ENCODE measurements at regions of chr17 and their contacts with region 1.

Region 1: DNA sequence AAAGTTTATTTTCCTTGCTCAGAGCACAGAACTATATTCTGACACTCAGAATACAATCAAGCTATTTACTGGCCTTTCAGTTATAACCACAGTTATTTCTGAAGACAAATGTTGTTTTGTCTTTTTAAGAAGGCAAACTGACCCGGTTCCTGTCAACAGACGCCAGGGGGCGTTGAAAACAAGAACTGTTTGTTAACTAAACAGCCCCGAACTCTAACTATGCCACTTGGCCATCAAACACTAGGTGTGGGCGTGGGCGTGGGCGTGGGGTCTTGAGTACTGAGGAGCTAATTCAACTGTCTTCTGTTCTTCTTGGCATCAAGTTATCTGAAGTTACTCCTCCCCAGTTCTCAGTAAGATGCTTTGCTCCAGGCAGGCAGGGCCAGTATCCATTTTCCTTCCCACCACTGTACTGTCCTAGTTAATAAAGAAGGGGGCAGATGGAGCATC is 63.2 kb upstream of the MTMR4 start:
- DNase-seq: peak; percentile 16 to 56
- ATAC-seq: no peak
- H3K4me3 ChIP-seq: no peak overlapping the region
- H3K27ac ChIP-seq: no peak overlapping the region
- H3K4me1 ChIP-seq: no peaks in the 10 kb centered on the region
- H3K27me3 ChIP-seq: no peaks in the 10 kb centered on the region
- CTCF ChIP-seq: peak; percentile 33

Region 2: DNA sequence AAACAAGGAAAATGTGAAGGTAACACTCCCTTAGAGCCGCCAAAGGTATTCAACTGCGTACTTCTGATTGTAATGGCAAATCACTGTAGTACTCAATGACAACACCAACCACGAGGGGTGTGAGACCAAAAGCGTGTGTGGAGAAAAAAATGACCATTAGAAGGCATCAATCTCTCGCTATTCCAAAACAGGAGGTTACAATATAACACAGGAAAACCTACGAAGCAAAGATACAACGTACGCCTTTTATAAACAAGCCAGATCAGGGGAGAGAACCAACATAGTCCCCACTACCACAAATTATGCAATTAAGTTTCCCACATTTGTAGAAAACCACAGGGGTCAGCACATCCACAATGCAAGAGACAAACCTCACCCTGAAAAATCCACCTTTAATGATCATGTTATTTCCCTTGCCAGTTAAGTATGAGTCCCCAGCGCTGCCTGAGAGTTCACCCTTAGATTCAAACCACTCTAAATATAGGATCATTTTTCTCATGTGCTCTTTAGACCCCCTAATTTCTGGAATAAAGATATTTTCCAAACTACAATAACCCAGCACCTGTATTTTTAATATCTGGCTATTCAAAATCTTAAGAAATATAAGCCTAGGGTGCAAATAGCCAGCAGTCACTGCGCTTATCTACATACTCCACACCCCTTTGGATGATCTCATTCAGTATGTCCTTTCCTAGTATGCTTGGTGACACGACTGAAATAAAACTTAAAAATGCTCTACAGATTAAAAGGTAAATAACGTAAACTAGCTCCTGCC is 101.8 kb after region 1 on chr17:
- intact Hi-C with region 1: loop called in 1 of 2 experiments (anchors 10 kb)
- DNase-seq: no peak
- ATAC-seq: no peak
- H3K4me3 ChIP-seq: no peak overlapping the region
- H3K27ac ChIP-seq: no peak overlapping the region
- H3K4me1 ChIP-seq: no peaks in the 10 kb centered on the region
- H3K27me3 ChIP-seq: peaks cover 0 to 21% (median 0%) of the 10 kb centered on the region in 3 donors
- CTCF ChIP-seq: no peak